ENCODE measurements at regions of chr21 and their contacts with region 1.

Region 1: DNA sequence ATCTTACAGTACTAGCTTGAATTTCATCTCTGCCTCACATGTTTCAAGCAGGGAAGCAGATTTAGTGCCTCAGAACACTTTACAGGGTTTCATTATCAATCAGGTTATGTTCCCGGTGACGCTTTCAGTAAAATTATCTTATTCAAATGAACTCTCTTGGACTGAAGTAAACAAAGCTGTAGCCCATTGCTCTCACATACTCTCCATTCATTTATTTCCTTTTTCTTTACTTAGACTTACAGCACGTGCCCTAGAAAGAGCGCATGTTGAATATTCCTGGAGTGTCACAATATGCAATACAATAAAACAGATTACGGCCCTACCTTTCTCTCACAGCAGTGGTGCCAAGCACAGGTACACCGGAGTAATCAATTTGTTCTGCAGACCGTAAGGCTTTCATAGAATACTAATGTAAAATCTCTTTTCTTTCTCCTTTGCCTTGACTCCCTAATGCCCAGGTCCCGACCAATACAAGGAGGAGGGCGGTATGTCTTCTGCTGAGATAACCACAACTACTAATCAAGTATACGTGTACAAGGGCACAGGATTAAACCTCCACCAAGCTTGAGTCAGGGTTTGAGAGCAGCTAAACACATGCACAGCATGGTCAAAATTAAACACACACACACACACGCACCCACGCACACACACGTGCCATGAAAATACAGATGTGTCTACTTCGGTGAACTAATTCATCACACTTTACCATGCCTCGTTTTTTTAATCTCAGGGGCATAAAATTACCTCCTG is 62.8 kb downstream of the NRIP1 start:
- DNase-seq: no peak
- H3K4me3 Mint-ChIP-seq: peak overlapping the region; percentile 51
- H3K27ac Mint-ChIP-seq: peak overlapping the region; percentile 80
- H3K4me1 Mint-ChIP-seq: peaks cover 37% of the 10 kb centered on the region
- H3K27me3 Mint-ChIP-seq: no peaks in the 10 kb centered on the region
- CTCF ChIP-seq: no peak

Region 2: GRCh38 chr21:15051644-15052458 is 49.8 kb after region 1 on chr21:
- CTCF ChIA-PET with region 1: no interaction called
- intact Hi-C with region 1: loop called (anchors 5 kb)
- DNase-seq: no peak
- H3K4me3 Mint-ChIP-seq: peak overlapping the region; percentile 75
- H3K27ac Mint-ChIP-seq: peak overlapping the region; percentile 97
- H3K4me1 Mint-ChIP-seq: peaks cover 51% of the 10 kb centered on the region
- H3K27me3 Mint-ChIP-seq: no peaks in the 10 kb centered on the region
- CTCF ChIP-seq: no peak

Measured in Calu3 (cell line).